CD4-positive, alpha-beta memory T cell (primary cell): ENCODE measurements at regions of chr2 and their contacts with region 1.

Region 1: DNA sequence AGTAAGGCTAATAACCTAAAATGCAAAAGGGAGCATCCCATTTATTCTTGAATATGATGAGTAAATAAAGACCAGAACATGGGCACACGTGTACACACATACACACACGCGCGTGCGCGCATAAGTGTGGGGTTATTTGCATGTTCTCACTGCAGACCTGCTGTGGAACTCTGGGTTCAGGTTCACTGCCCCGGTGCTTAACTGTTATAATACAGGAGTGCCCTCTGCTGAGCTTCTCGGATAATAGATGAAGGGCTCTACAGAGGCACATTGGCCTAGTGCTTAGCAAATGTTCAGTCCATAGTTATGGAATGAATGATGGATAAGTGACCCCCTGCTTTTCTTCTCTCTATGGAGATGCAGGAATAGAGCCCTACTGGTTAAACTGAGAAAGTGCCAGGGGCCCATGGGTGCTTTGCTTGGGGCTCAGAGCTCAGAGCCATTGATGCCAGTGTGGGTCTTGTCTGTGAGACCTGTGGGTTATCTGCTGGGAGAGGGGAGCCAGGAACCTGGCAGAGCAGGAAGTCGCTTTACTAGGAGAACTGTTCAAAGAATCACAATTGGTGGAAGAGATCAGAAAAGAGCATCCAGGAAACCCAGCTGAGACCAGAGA is 3.6 kb upstream of the ARL4C start:
- DNase-seq: peak; percentile 73 to 85 (median 78)
- H3K4me3 ChIP-seq: peak overlapping the region in 1 of 2 donors; percentile 9
- H3K4me3 Mint-ChIP-seq: peak overlapping the region; percentile 57 to 91 (median 83)
- H3K27ac ChIP-seq: peak overlapping the region; percentile 77
- H3K27ac Mint-ChIP-seq: peak overlapping the region; percentile 81 to 97 (median 94)
- H3K4me1 ChIP-seq: peaks cover 32% of the 10 kb centered on the region
- H3K4me1 Mint-ChIP-seq: peaks cover 26 to 41% (median 30%) of the 10 kb centered on the region in 4 donors
- H3K27me3 ChIP-seq: no peaks in the 10 kb centered on the region
- H3K27me3 Mint-ChIP-seq: no peaks in the 10 kb centered on the region

Region 2: DNA sequence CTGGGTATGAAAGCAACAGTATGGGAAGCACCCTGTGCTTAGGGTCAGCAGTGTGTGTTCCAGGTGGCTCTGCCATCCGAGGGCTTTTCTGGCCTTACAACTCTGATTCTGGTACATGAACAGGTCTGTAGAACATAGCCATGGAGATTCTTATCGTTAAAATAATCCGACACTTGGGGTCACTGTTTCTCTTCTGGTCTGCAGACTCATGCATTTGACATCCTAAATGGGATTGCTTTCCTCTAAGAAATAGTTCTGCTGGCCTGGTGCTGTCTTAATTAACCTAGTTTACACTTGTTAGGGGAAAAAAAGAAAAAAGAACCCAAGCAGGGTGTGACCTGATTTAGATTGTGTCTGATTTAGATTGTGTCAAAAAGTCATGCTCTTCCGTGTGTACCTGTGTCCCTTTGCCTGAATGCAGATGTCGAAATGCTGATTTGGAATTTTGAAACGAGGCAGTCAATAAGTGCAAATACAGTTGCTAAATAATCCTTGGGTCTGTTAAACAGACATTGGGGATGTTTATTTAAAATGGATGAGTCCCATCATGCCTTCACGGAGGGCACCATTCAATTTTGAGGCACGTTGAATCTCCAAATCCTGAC is 523.7 kb before region 1 on chr2:
- CTCF ChIA-PET with region 1: interaction called, 40 read pairs
- POLR2A ChIA-PET with region 1: interaction called, 4 read pairs
- intact Hi-C with region 1: loop called (anchors 1 kb)
- DNase-seq: peak; percentile 40 to 69 (median 66)
- H3K4me3 ChIP-seq: no peak overlapping the region
- H3K4me3 Mint-ChIP-seq: peak overlapping the region in 6 of 8 donors; percentile 1 to 66 (median 27)
- H3K27ac ChIP-seq: no peak overlapping the region
- H3K27ac Mint-ChIP-seq: peak overlapping the region in 6 of 7 donors; percentile 9 to 83 (median 48)
- H3K4me1 ChIP-seq: peaks cover 24% of the 10 kb centered on the region
- H3K4me1 Mint-ChIP-seq: peaks cover 25 to 38% (median 27%) of the 10 kb centered on the region in 4 donors
- H3K27me3 ChIP-seq: no peaks in the 10 kb centered on the region
- H3K27me3 Mint-ChIP-seq: no peaks in the 10 kb centered on the region

Region 3: GRCh38 chr2:234102112-234102511 is 398.4 kb before region 1 on chr2:
- CTCF ChIA-PET with region 1: interaction called, 4 read pairs
- POLR2A ChIA-PET with region 1: no interaction called
- intact Hi-C with region 1: loop called (anchors 1 kb)
- DNase-seq: peak in 4 of 5 donors; percentile 27 to 49 (median 48)
- H3K4me3 ChIP-seq: peak overlapping the region in 1 of 2 donors; percentile 18
- H3K4me3 Mint-ChIP-seq: peak overlapping the region in 6 of 8 donors; percentile 14 to 77 (median 52)
- H3K27ac ChIP-seq: no peak overlapping the region
- H3K27ac Mint-ChIP-seq: peak overlapping the region; percentile 1 to 80 (median 62)
- H3K4me1 ChIP-seq: peaks cover 37% of the 10 kb centered on the region
- H3K4me1 Mint-ChIP-seq: peaks cover 38 to 57% (median 44%) of the 10 kb centered on the region in 4 donors
- H3K27me3 ChIP-seq: no peaks in the 10 kb centered on the region
- H3K27me3 Mint-ChIP-seq: no peaks in the 10 kb centered on the region

Region 4: GRCh38 chr2:234278556-234279255 is 221.8 kb before region 1 on chr2:
- CTCF ChIA-PET with region 1: interaction called, 4 read pairs
- POLR2A ChIA-PET with region 1: interaction called, 10 read pairs
- intact Hi-C with region 1: no loop called
- DNase-seq: peak in 4 of 5 donors; percentile 55 to 68 (median 60)
- H3K4me3 ChIP-seq: no peak overlapping the region
- H3K4me3 Mint-ChIP-seq: peak overlapping the region in 6 of 8 donors; percentile 25 to 65 (median 46)
- H3K27ac ChIP-seq: no peak overlapping the region
- H3K27ac Mint-ChIP-seq: peak overlapping the region; percentile 53 to 83 (median 75)
- H3K4me1 ChIP-seq: peaks cover 58% of the 10 kb centered on the region
- H3K4me1 Mint-ChIP-seq: peaks cover 36 to 70% (median 52%) of the 10 kb centered on the region in 4 donors
- H3K27me3 ChIP-seq: no peaks in the 10 kb centered on the region
- H3K27me3 Mint-ChIP-seq: no peaks in the 10 kb centered on the region

Region 5: GRCh38 chr2:234446404-234447076 is 54.0 kb before region 1 on chr2:
- CTCF ChIA-PET with region 1: interaction called, 4 read pairs
- POLR2A ChIA-PET with region 1: interaction called, 859 read pairs
- intact Hi-C with region 1: no loop called
- DNase-seq: peak; percentile 87 to 92 (median 90)
- H3K4me3 ChIP-seq: no peak overlapping the region
- H3K4me3 Mint-ChIP-seq: peak overlapping the region; percentile 38 to 90 (median 80)
- H3K27ac ChIP-seq: peak overlapping the region; percentile 84
- H3K27ac Mint-ChIP-seq: peak overlapping the region; percentile 98 to 100 (median 100)
- H3K4me1 ChIP-seq: peaks cover 95% of the 10 kb centered on the region
- H3K4me1 Mint-ChIP-seq: peaks cover 69 to 96% (median 77%) of the 10 kb centered on the region in 4 donors
- H3K27me3 ChIP-seq: no peaks in the 10 kb centered on the region
- H3K27me3 Mint-ChIP-seq: no peaks in the 10 kb centered on the region

Region 6: DNA sequence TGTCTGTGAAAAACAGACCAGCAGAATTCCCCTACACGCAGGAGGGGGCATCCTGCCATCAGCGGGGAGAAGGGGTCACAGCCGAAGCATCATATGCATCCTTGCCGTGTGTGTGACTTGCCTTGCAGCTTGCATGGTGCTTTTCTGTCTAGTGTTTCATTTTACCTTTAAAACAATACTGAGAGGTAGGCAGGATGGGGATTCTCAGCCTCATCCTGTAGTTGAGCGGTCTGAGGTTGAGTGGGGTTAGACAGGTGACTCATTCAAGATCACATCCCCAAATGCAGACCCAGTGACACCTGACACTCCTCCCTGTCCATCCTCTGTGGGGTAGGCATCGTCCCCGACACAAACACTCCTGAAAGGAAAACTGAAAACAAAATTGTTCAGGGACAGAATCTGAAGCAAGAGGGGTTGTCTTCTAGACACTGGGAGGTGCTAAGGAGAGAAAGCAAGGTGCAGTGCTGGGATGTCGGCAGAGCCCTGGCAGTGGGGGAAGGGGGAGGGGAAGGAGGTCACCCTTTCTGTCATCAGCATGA is 11.5 kb before region 1 on chr2:
- CTCF ChIA-PET with region 1: interaction called, 15 read pairs
- POLR2A ChIA-PET with region 1: interaction called, 92 read pairs
- intact Hi-C with region 1: no loop called
- DNase-seq: peak; percentile 81 to 94 (median 84)
- H3K4me3 ChIP-seq: peak overlapping the region in 1 of 2 donors; percentile 25
- H3K4me3 Mint-ChIP-seq: peak overlapping the region; percentile 84 to 100 (median 98)
- H3K27ac ChIP-seq: peak overlapping the region; percentile 98
- H3K27ac Mint-ChIP-seq: peak overlapping the region; percentile 97 to 100 (median 99)
- H3K4me1 ChIP-seq: peaks cover 87% of the 10 kb centered on the region
- H3K4me1 Mint-ChIP-seq: peaks cover 63 to 94% (median 81%) of the 10 kb centered on the region in 4 donors
- H3K27me3 ChIP-seq: no peaks in the 10 kb centered on the region
- H3K27me3 Mint-ChIP-seq: no peaks in the 10 kb centered on the region